ENCODE measurements at regions of chr6 and their contacts with region 1.

Region 1: DNA sequence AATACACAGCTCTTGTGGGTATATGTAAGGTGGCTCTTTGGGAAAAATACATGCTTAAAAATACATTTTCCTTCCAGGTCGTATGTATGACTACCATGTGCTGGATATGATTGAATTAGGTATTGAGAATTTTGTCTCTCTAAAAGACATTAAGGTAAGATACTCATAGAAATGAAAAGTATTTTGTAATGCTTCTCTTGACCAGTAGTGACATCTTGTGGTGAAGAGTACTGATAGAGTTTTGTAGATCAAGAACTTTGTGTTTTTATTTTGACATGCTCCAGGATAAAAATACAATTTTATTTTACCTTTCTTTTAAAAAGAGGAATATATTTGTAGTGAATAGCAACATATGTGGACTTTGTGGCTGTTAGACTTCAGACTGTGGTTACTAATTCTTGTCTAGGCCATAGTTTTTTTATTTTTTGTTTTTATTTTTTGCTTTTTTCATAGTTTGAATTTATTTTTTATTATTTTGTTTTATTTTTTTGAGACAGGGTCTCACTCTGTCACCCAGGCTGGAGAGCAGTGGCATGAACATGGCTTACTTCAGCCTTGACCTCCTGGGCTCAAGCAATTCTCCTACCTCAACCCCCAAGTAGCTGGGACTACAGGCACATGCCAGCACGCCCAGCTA is 17.9 kb downstream of the RPF2 start:
- H3K4me3 ChIP-seq: no peak overlapping the region
- H3K27ac ChIP-seq: no peak overlapping the region
- H3K4me1 ChIP-seq: no peaks in the 10 kb centered on the region
- CTCF ChIP-seq: no peak

Region 2: DNA sequence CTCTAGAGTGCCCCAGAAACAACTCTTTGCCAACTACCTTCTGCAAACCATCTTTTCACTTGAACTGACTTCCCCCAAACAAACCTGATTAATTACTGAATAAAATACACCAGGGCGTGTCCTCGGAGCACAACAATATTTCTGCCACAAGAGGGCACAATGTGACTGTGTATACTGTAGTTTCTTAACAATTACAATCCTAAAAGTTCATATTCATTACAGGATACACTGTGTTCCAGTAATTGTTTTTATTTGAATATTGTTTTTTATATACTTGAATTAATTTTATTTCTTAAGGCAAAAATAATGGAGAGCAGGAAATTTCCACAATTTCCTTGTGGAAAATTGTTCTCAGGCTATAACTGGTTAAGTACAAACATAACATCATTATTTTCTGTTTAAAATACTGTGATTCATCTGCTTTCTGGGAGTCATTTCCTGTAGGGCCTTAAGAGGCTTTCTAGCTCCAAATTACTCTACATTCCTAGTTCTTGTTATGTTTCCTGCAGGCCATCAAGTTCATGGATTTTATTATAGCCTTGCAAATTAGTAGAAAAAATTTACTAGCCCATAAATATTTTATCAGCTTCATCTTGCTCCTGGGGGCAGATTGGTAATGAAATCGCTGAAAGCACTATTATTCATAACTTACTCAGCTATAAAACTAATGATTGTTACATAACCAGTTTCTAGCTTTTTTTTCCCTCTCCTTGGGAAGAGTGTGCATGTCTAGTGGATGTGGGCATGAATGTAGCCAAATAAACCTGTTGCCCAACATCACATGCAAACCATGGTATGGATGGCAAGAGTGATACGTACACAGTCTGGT is 471.4 kb before region 1 on chr6:
- CTCF ChIA-PET with region 1: interaction called, 11 read pairs
- POLR2A ChIA-PET with region 1: no interaction called
- H3K4me3 ChIP-seq: no peak overlapping the region
- H3K27ac ChIP-seq: no peak overlapping the region
- H3K4me1 ChIP-seq: peaks cover 8% of the 10 kb centered on the region
- CTCF ChIP-seq: peak; percentile 60; the same call in 1 of the 2 replicates

Region 3: DNA sequence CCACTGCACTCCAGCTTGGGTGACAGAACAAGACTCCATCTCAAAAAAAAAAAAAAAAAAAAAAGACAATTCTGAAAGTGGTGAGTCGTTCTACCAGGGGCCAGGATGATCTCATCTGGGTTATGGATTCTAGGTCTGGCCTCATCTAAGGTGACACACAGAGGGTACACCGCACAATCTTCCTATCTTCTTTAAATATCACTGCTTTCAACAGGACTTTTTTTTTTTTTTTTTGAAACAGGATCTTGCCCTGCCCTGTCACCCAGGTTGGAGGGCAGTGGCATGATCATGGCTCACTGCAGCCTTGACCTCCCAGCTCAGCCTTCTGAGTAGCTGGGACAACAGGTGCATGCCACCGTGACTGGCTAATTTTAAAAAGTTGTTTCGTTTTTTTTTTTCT is 155.2 kb after region 1 on chr6:
- CTCF ChIA-PET with region 1: no interaction called
- POLR2A ChIA-PET with region 1: no interaction called
- H3K4me3 ChIP-seq: no peak overlapping the region
- H3K27ac ChIP-seq: no peak overlapping the region
- H3K4me1 ChIP-seq: no peaks in the 10 kb centered on the region
- CTCF ChIP-seq: no peak